ENCODE measurements at regions of chr15 and their contacts with region 1.

Region 1: DNA sequence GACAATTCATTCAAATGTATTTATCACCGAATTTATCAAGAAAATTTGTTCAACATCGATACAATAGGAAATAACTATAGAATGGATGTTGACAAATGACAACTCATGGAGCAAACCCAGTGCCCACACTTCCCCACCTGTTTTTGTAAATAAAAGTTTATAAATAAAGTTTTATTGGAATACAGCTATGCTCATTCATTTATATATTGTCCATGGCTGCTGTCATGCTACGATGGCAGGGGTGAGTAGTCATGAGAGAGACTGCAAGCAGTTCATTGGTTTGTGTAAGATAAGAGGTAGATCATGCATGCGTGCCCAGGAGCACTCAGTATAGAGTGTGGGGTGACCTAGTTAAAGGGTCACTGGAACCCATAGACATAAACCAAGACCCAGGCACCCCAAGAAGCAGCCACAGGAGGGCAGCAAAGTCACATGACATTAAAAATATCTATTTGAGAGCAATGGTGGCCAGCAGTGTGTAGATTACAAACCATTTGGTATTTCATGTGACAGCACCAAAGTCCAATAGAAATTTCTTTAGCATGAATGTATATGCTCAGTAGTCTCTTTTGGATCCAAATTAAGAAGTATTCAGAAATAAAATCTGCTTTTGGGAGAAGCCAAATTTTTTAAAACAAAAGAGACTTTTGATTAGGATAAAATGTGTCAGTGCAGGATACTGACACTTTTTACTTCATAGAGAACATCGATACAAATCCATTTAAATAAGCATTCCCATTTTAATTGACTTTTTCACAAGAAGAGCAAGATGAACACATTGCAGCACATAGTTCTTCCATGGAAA is 794.8 kb downstream of the MCTP2 start:
- DNase-seq: peak; percentile 71
- H3K4me3 ChIP-seq: no peak overlapping the region
- H3K27ac ChIP-seq: no peak overlapping the region
- H3K4me1 ChIP-seq: no peaks in the 10 kb centered on the region
- H3K27me3 ChIP-seq: no peaks in the 10 kb centered on the region
- CTCF ChIP-seq: peak; percentile 71

Region 2: DNA sequence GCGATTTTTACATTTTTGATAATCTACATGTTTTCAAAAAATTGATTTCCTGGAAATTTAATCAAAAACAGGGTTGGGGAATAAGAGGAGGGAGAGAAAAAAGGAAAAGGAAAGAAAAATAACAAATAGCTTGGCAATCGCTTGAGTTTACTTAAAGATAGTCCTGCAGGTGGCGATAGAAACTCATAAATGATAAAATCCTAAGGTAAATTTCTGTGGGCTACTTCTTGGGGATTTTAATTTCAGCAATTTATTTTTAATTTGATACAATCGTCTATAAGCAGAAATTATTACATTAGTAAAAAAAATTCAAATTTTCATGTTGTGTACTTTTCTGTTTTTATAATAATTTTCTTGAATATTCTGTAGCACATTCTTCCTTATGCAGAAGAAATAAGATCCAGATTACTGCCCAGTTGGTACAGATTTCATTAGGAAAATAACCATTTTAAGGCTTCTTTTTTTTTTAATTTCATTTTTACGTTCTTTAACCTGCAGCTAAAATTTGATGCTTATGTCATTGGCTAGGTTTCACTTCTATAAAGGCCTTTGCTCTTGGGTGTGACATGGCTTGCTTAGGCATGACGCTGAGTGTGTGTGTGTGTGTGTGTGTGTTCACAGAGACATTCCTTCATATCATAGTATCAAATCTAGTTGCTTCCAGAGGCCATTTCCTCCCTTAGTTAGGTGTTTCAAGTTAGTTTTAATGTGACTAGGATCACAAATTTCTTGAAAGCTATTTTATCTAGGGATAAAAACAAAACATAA is 613.0 kb before region 1 on chr15:
- CTCF ChIA-PET with region 1: no interaction called
- POLR2A ChIA-PET with region 1: no interaction called
- intact Hi-C with region 1: loop called (anchors 5 kb)
- DNase-seq: peak; percentile 51
- H3K4me3 ChIP-seq: no peak overlapping the region
- H3K27ac ChIP-seq: no peak overlapping the region
- H3K4me1 ChIP-seq: no peaks in the 10 kb centered on the region
- H3K27me3 ChIP-seq: no peaks in the 10 kb centered on the region
- CTCF ChIP-seq: peak; percentile 66

Region 3: DNA sequence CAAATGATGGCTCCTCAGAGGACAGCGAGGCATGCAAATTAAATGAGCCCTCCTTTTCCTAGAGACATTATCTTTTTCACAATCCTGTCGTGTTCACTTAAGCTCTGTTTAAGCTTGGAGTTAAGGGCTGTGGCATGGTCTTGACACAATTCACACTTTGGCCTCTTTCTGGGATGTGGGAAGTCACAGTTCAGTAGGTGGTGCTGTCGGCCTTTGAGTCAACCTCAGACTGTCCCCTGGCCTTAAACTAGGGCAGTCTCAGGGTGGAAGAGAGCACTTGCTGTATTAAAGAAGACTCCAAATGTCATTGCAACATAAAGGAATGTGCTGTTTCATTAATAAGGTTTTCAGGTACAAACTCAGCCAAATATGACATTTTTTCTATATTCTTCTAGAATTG is 443.8 kb before region 1 on chr15:
- CTCF ChIA-PET with region 1: no interaction called
- POLR2A ChIA-PET with region 1: no interaction called
- intact Hi-C with region 1: loop called (anchors 5 kb)
- DNase-seq: peak; percentile 61
- H3K4me3 ChIP-seq: no peak overlapping the region
- H3K27ac ChIP-seq: no peak overlapping the region
- H3K4me1 ChIP-seq: no peaks in the 10 kb centered on the region
- H3K27me3 ChIP-seq: no peaks in the 10 kb centered on the region
- CTCF ChIP-seq: peak; percentile 60

Region 4: GRCh38 chr15:94670438-94671034 is 355.6 kb before region 1 on chr15:
- CTCF ChIA-PET with region 1: interaction called, 5 read pairs
- POLR2A ChIA-PET with region 1: no interaction called
- intact Hi-C with region 1: loop called (anchors 5 kb)
- DNase-seq: peak; percentile 59
- H3K4me3 ChIP-seq: no peak overlapping the region
- H3K27ac ChIP-seq: no peak overlapping the region
- H3K4me1 ChIP-seq: peaks cover 9% of the 10 kb centered on the region
- H3K27me3 ChIP-seq: no peaks in the 10 kb centered on the region
- CTCF ChIP-seq: peak; percentile 80

Region 5: DNA sequence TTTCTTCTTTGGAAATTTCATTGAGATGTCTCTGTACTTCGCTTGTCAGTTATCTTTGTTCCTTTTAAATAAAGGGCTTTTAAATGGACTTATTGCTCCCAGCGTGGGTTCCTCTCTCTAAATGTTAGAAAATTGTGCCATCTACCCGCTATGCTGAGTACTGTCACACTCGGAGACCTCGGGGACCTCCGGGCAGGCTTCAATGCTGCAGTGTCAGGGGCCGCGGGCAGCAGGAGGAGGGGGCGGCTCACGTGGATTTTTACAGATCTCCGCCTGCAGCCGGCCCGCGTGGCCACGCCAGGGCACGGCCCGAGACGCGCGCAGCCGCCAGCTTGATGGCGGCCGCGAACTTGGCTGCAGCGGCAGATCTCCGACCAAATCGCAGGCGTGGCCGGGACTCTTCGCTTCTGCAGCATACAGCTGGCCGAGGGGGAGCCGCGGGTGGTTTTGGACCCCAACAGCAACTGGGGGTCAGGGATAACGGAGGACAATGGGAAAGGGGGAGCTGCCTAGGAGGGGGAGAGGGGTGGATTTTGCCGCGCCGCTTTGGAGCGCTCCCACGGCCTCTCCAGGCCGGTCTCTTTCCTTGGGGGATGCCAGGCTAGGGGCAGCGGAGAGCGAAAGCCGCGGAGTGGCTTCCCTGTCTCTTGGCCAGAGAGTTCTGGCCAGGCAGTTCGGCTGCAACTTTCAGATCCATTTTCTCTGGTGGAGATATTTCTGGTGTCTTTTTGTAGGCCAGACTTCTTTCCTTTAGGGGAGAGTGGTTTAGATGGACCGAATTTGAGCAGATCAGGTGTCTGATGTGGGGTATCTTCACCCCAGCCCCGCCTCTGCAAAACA is 1319.7 kb after region 1 on chr15:
- CTCF ChIA-PET with region 1: no interaction called
- POLR2A ChIA-PET with region 1: no interaction called
- intact Hi-C with region 1: loop called (anchors 5 kb)
- DNase-seq: peak; percentile 88
- H3K4me3 ChIP-seq: peak overlapping the region; percentile 50
- H3K27ac ChIP-seq: peak overlapping the region; percentile 79
- H3K4me1 ChIP-seq: peaks cover 88% of the 10 kb centered on the region
- H3K27me3 ChIP-seq: no peaks in the 10 kb centered on the region
- CTCF ChIP-seq: peak; percentile 79

Measured in A673 (cell line).